ENCODE measurements at regions of chr1 and their contacts with region 1.

Region 1: GRCh38 chr1:38834937-38835827 is 24.4 kb downstream of the RRAGC start:
- DNase-seq: no peak

Region 2: DNA sequence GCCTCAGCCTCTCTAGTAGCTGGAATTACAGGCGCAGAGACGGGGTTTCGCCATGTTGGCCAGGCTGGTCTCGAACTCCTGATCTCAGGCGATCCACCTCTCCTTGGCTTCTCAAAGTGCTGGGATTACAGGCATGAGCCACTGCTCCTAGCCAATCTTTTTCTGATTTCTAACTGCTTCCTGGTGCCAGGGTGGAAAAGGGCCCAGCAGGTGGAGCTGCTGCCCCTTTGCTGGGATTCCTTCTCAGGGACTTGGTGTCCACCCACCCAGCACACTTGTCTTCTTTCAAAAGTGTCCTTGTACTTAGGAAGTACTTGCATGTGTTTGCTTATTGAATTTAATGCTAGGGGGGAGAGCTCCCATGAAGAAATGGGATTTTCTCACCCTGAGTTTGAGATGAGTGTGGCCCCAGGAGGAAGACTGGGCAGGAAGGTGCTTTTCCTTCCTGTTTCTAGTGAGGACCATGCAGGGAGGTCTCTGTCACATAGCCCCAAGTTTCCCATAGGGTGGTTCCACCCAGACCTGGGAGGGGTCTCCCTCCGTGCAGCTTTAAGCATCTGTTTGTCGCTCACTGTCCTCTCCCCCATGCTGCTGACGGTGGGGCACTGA is 808.5 kb before region 1 on chr1:
- intact Hi-C with region 1: loop called (anchors 10 kb)
- DNase-seq: peak; percentile 58

Region 3: GRCh38 chr1:38613996-38614395 is 221.2 kb before region 1 on chr1:
- intact Hi-C with region 1: loop called (anchors 5 kb)
- DNase-seq: no peak

Region 4: DNA sequence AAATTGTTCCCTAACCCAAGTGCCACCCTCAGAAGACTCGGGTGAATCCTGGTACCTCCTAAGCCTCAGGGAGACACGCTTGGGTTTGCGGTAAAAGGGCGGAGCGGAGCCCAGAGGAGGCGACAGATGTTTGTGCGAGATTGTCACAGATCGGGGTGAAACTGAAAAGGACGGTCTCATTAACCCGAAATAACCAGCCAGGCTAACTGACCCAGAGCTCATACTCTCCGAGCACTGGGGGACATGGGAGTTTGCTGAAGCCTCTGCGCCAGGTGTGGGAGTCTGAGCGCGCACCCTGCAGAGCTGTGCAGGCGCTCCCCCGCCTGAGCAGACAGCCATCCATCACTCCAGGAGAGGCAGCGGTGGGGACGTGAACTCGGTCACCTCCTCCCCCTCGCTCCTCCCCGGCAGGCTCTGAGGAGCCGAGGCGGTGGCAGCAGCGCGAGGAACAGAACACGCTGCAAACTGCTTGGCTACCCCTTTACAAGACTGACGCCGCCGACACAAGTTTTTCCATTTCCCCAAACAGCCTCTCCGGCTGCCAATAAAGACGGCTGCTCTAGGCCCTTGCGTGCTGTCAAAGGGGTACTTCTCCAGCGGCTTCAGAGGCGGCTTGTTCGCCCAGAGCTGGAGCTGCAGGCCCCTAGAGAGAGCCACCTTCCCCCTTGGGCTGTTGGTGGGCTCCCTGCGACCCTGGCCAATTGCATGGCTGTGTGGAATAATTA is 19.1 kb before region 1 on chr1:
- intact Hi-C with region 1: no loop called
- DNase-seq: no peak

Measured in cardiac septum (tissue), 1 donor.